Vagina (tissue), 2 donors: ENCODE measurements at regions of chr3 and their contacts with region 1.

Region 1: DNA sequence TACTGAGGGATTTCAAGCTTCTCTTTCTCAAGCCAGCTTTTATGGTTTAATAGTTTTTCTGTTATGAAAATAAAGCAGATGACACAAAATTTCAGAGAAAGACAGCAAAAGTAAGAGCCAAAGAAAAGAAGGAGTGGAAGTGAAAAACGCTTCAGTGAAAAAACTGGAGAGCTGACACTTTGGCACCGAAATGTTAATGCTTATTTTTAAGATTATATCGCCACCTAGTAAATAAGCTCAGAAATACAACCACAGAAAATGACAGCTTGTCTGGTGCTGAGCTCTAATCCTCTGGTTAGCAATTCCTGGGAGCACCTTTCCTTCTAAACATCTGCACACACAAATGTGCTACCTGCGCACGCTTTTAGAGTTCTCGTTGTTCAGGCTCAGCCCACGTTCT is 101.6 kb downstream of the ZPLD1 start:
- DNase-seq: no peak
- H3K4me3 ChIP-seq: no peak overlapping the region
- H3K27ac ChIP-seq: no peak overlapping the region
- H3K4me1 ChIP-seq: no peaks in the 10 kb centered on the region
- H3K27me3 ChIP-seq: no peaks in the 10 kb centered on the region
- CTCF ChIP-seq: peak in 1 of 3 experiments; percentile 33
- POLR2A ChIP-seq: no peak

Region 2: GRCh38 chr3:101720851-101721649 is 815.4 kb before region 1 on chr3:
- intact Hi-C with region 1: no loop called
- DNase-seq: no peak
- H3K4me3 ChIP-seq: no peak overlapping the region
- H3K27ac ChIP-seq: no peak overlapping the region
- H3K4me1 ChIP-seq: peaks cover 4% of the 10 kb centered on the region
- H3K27me3 ChIP-seq: no peaks in the 10 kb centered on the region
- CTCF ChIP-seq: no peak
- POLR2A ChIP-seq: no peak

Region 3: DNA sequence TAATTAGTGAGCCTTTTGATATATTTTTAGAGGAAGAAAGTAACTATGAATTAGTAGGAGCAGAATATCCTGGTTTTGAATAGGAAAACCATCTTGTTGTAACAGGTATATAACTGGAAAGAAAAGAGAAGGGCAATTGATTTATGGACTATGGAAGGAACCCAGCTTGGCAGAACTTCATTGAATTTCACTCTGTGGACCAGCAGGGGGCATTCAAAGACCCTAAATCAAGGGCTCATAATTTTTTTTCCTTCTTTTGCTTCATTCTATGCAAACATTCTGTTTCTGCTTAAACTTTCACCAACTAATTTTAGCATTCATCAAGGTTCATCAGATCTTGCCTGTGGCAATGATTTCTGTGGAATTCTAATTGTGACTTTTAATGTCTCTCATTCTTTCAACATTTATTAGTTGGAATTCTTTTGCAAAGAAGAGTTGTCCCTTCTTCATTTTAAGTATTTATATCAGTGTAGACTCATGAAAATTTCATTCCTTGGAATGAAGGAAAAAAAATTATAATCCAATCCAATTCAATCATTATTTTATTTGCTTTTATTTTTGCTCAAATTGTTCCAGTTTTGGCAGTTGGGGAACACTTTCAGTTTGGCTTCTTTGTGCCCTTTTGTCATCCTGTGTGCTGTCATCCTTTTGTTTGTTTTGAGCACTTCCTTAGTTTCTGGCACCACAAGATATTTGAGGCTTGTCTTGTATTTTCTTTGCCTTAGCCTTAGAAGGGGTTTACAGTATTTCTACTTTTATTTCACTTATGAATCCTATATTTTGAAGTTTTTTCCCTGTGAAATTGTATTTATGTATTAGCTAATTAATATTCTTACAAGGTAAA is 727.1 kb before region 1 on chr3:
- intact Hi-C with region 1: loop called (anchors 5 kb)
- DNase-seq: no peak
- H3K4me3 ChIP-seq: no peak overlapping the region
- H3K27ac ChIP-seq: peak overlapping the region; percentile 53
- H3K4me1 ChIP-seq: peaks cover 16% of the 10 kb centered on the region
- H3K27me3 ChIP-seq: no peaks in the 10 kb centered on the region
- CTCF ChIP-seq: peak; percentile 41 to 78 (median 76)
- POLR2A ChIP-seq: no peak

Region 4: GRCh38 chr3:102229062-102229655 is 307.3 kb before region 1 on chr3:
- intact Hi-C with region 1: loop called (anchors 2 kb)
- DNase-seq: no peak
- H3K4me3 ChIP-seq: no peak overlapping the region
- H3K27ac ChIP-seq: no peak overlapping the region
- H3K4me1 ChIP-seq: no peaks in the 10 kb centered on the region
- H3K27me3 ChIP-seq: no peaks in the 10 kb centered on the region
- CTCF ChIP-seq: peak; percentile 74 to 92 (median 89)
- POLR2A ChIP-seq: no peak